Calu3 (cell line): ENCODE measurements at regions of chrX and their contacts with region 1.

Region 1: GRCh38 chrX:152131525-152131924 is 6.9 kb downstream of the MAGEA10 start:
- DNase-seq: no peak
- H3K4me3 Mint-ChIP-seq: no peak overlapping the region
- H3K27ac Mint-ChIP-seq: no peak overlapping the region
- H3K4me1 Mint-ChIP-seq: peaks cover 12% of the 10 kb centered on the region
- H3K27me3 Mint-ChIP-seq: peaks cover 11% of the 10 kb centered on the region
- CTCF ChIP-seq: no peak

Region 2: DNA sequence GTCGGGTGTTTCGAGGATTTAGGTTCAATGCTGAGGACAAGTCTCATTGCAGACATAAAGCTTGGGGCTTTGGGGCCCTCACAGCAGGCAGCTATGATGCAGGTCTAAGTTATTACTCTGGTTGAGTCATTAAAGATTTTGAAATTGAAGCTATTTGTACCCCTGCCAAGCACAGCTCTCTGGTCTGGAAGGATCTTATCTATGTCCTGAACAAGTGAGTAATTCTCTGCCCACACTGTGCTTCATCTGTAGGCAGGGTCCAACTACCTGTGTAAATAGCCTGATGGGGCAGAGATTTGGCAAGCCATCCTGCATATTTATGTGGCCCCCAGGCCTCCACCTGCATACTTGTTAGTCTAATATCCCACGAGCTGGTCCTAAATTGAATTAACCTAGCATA is 260.3 kb before region 1 on chrX:
- CTCF ChIA-PET with region 1: no interaction called
- intact Hi-C with region 1: loop called (anchors 10 kb)
- DNase-seq: peak; percentile 29
- H3K4me3 Mint-ChIP-seq: no peak overlapping the region
- H3K27ac Mint-ChIP-seq: no peak overlapping the region
- H3K4me1 Mint-ChIP-seq: peaks cover 32% of the 10 kb centered on the region
- H3K27me3 Mint-ChIP-seq: peaks cover 13% of the 10 kb centered on the region
- CTCF ChIP-seq: no peak

Region 3: DNA sequence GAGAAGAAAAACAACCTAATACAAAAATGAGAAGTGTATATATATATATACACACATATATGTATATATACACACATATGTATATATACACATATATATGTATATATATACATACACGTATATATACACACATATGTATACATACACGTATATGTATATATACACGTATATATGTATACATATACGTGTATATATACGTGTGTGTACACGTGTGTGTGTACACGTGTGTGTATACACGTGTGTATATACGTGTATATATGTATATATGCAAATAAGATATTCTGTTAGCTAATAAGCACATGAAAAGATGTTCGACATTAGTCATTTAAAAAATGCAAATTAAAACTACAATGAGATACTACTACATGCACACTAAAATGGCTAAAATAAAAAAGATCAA is 99.6 kb after region 1 on chrX:
- CTCF ChIA-PET with region 1: no interaction called
- intact Hi-C with region 1: no loop called
- DNase-seq: no peak
- H3K4me3 Mint-ChIP-seq: no peak overlapping the region
- H3K27ac Mint-ChIP-seq: no peak overlapping the region
- H3K4me1 Mint-ChIP-seq: no peaks in the 10 kb centered on the region
- H3K27me3 Mint-ChIP-seq: no peaks in the 10 kb centered on the region
- CTCF ChIP-seq: no peak